ENCODE measurements at regions of chr5 and their contacts with region 1.

Region 1: GRCh38 chr5:38193015-38193581 is 65.3 kb upstream of the EGFLAM start:
- DNase-seq: no peak
- H3K4me3 ChIP-seq: no peak overlapping the region
- CTCF ChIP-seq: peak; percentile 93

Region 2: DNA sequence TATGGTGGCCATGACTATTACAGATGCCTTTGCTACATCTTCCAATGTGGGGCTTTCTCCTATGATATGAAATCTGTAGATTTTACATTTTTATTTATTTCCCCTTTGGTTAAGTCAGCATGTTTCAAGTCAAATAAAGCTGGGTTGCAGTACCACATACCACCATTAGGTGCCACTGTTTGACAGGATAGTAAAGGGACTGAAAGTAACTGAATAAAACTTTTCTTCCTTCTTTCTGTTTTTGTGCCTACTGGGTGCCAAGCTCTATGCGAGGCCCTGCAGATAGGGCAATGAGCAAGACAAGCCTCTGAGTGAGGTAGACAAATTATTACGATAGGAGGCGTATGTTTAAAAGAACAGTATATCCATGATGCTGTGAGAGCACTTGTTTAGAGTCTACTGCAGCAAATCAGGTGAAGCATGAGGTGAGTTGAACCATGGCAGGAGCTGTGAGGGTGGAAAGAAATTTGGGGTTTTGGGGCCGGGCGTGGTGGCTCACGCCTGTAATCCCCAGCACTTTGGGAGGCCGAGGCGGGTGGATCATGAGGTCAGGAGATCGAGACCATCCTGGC is 418.1 kb before region 1 on chr5:
- CTCF ChIA-PET with region 1: interaction called, 33 read pairs
- POLR2A ChIA-PET with region 1: no interaction called
- DNase-seq: no peak
- H3K4me3 ChIP-seq: no peak overlapping the region
- CTCF ChIP-seq: peak; percentile 50

Region 3: DNA sequence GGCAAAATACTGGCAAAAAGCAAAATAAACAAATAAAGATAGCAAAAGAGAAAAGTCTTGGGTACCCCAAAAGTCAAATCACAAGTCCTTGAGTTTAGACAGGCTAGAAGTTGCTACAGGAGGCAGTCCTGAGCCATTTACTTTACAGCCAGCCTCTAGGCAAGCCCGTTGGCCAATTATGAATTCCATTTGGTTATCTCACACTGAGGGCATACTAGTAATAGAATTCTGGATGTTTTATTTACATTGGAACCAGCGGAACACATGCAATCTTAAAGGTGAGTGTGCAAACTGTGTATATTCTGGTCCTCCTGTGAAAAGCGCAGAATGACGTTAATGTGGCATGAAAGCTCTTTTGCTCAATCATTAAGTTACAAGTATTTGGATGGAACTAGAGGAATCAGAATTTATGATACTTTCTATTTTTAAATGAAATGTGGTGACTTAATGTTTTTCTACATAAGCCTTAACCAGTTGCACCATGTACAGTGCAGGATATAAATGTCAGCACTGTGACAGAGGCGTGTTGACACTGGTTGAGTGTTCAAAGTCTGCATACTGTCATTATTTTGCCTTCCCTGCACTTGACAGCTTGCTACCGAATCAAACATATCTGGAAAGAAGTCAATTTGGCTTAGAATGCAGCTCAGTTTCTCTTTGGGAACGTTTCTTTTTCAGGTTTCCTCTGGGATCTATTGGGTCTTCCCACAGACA is 361.1 kb before region 1 on chr5:
- CTCF ChIA-PET with region 1: interaction called, 77 read pairs
- POLR2A ChIA-PET with region 1: no interaction called
- DNase-seq: no peak
- H3K4me3 ChIP-seq: no peak overlapping the region
- CTCF ChIP-seq: no peak

Region 4: GRCh38 chr5:38182991-38183390 is 10.1 kb before region 1 on chr5:
- CTCF ChIA-PET with region 1: interaction called, 35 read pairs
- POLR2A ChIA-PET with region 1: no interaction called
- DNase-seq: no peak
- H3K4me3 ChIP-seq: no peak overlapping the region
- CTCF ChIP-seq: no peak

Region 5: DNA sequence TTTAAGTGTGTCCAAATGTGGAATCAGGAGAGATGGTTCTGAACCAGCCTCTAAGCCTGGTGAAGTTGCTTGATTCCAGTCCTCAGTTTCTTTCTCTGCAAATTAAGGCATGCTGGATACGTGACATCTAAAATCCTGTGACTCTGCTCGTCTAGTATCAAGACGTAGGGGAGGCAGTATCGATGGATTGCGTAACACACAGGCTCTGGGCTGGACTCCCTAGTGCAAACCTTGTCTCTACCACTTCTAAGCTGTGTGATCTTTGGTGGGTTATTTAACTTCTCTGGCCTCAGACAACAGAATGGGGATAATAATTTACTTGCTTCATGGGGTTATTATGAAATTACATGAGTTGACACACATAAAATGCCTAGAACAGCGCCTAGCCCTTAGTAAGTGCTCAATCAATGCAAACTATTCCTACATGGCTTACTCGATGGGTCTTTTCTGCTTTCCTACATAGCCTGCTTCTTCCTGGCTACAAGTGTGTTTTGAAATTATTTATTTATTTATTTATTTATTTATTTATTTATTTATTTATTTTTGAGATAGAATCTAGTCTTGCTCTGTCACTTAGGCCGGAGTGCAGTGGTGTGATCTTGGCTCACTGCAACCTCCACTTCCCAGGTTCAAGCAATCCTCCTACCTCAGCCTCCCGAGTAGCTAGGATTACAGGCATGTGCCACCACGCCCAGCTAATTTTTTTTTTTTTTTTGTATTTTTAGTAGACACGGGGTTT is 167.4 kb after region 1 on chr5:
- CTCF ChIA-PET with region 1: no interaction called
- POLR2A ChIA-PET with region 1: no interaction called
- DNase-seq: no peak
- H3K4me3 ChIP-seq: no peak overlapping the region
- CTCF ChIP-seq: no peak

Measured in AG04449 (cell line).